A549 (cell line): ENCODE measurements at regions of chr16 and their contacts with region 1.

Region 1: DNA sequence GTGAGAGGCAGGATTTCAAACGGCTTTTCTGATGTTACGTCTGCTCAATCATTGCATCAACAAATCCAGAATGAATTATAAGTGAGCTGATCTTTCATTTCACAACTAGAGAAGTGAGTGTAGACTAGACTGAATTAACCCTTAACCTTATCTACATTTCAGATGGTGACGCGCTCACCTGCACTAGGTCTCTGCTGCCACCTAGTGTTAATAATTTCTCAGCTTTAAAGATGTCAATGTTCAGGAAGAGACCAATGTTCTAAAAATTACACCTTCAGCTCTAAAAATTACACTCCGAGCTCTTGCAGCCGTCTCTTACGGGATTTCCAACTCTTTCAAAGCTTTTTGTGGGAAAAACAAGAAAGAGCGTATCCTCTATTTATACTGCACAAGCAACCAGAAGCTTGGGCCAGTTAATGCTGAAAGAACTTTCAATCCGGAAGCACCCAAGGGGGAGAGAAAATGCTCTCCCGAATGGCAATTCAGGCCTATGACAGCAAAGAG is 88.2 kb upstream of the FA2H start:
- DNase-seq: peak; percentile 63 to 69
- ATAC-seq: peak; percentile 88 to 89
- H3K4me3 ChIP-seq: no peak overlapping the region
- H3K27ac ChIP-seq: no peak overlapping the region
- H3K4me1 ChIP-seq: no peaks in the 10 kb centered on the region
- CTCF ChIP-seq: peak; percentile 97
- EP300 ChIP-seq: no peak
- POLR2A ChIP-seq: no peak
- RAD21 ChIP-seq: peak; percentile 94 to 98

Region 2: DNA sequence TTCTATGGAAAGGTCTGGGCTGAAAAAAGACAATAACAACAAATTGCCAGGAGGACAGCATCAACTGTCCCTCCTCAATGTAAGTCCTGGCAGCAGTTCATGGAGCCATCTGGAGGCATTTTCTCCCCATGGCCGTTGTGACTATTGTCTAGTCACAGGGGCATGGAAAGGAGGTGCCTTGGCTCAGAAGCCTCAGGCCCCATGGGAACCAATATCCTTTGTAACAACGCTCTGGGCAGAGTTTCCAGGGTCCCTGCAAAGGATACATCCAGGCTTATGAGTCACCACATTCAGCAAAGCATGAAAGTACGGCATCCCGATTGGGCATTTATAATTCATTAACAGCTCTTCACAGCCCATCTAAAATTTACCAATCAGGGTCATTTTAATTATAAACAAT is 341.1 kb before region 1 on chr16:
- CTCF ChIA-PET with region 1: no interaction called
- POLR2A ChIA-PET with region 1: no interaction called
- DNase-seq: no peak
- ATAC-seq: peak in 1 of 2 experiments; percentile 42; a peak in 2 of 6 replicates
- H3K4me3 ChIP-seq: no peak overlapping the region
- H3K27ac ChIP-seq: no peak overlapping the region
- H3K4me1 ChIP-seq: no peaks in the 10 kb centered on the region
- CTCF ChIP-seq: no peak
- EP300 ChIP-seq: no peak
- POLR2A ChIP-seq: no peak
- RAD21 ChIP-seq: no peak

Region 3: GRCh38 chr16:74666425-74667254 is 196.2 kb before region 1 on chr16 and contains the start of gene RFWD3:
- CTCF ChIA-PET with region 1: interaction called, 11 read pairs
- POLR2A ChIA-PET with region 1: interaction called, 3 read pairs
- DNase-seq: peak; percentile 99 to 100
- ATAC-seq: peak; percentile 100
- H3K4me3 ChIP-seq: peak within 1 kb of the TSS; percentile 91
- H3K27ac ChIP-seq: peak within 1 kb of the TSS; percentile 88 to 93
- H3K4me1 ChIP-seq: peaks cover 12% of the 10 kb centered on the region; the same call in 1 of the 3 replicates
- CTCF ChIP-seq: no peak
- EP300 ChIP-seq: no peak
- POLR2A ChIP-seq: peak; percentile 85
- RAD21 ChIP-seq: no peak
- polyA plus RNA-seq, gene RFWD3: 50.6 and 52.5 TPM in 2 replicates

Region 4: GRCh38 chr16:74718741-74719610 is 143.8 kb before region 1 on chr16:
- CTCF ChIA-PET with region 1: interaction called, 176 read pairs
- POLR2A ChIA-PET with region 1: no interaction called
- DNase-seq: no peak
- ATAC-seq: peak in 1 of 2 experiments; percentile 57; a peak in 2 of 6 replicates
- H3K4me3 ChIP-seq: no peak overlapping the region
- H3K27ac ChIP-seq: no peak overlapping the region
- H3K4me1 ChIP-seq: no peaks in the 10 kb centered on the region
- CTCF ChIP-seq: no peak
- EP300 ChIP-seq: no peak
- POLR2A ChIP-seq: no peak
- RAD21 ChIP-seq: 0 out of 5 replicates have a peak, but pooled peaks of 1 of the 2 experiments have one; percentile 6

Region 5: GRCh38 chr16:74774203-74775116 is 88.3 kb before region 1 on chr16 and contains the start of gene FA2H:
- CTCF ChIA-PET with region 1: interaction called, 14 read pairs
- POLR2A ChIA-PET with region 1: interaction called, 4 read pairs
- DNase-seq: peak; percentile 71 to 96
- ATAC-seq: peak; percentile 96 to 98
- H3K4me3 ChIP-seq: peak within 1 kb of the TSS; percentile 87
- H3K27ac ChIP-seq: peak within 1 kb of the TSS; percentile 80 to 85
- H3K4me1 ChIP-seq: peaks cover 10% of the 10 kb centered on the region; the same call in 2 of the 3 replicates
- CTCF ChIP-seq: peak; percentile 50
- EP300 ChIP-seq: no peak
- POLR2A ChIP-seq: peak; percentile 34; the same call in 1 of the 2 replicates
- RAD21 ChIP-seq: peak in 1 of 2 experiments; percentile 44; a peak in 3 of 5 replicates
- polyA plus RNA-seq, gene FA2H: 7.1 and 11.0 TPM in 2 replicates

Region 6: GRCh38 chr16:74813109-74813641 is 49.6 kb before region 1 on chr16:
- CTCF ChIA-PET with region 1: interaction called, 161 read pairs
- POLR2A ChIA-PET with region 1: no interaction called
- DNase-seq: peak; percentile 87 to 91
- ATAC-seq: peak; percentile 99 to 100
- H3K4me3 ChIP-seq: no peak overlapping the region
- H3K27ac ChIP-seq: peak overlapping the region; percentile 39 to 74; a peak in 5 of 6 replicates
- H3K4me1 ChIP-seq: no peaks in the 10 kb centered on the region
- CTCF ChIP-seq: peak; percentile 96
- EP300 ChIP-seq: no peak
- POLR2A ChIP-seq: no peak
- RAD21 ChIP-seq: peak; percentile 88 to 96

Region 7: GRCh38 chr16:74852500-74852875 is 10.3 kb before region 1 on chr16:
- CTCF ChIA-PET with region 1: interaction called, 47 read pairs
- POLR2A ChIA-PET with region 1: no interaction called
- DNase-seq: no peak
- ATAC-seq: no peak
- H3K4me3 ChIP-seq: no peak overlapping the region
- H3K27ac ChIP-seq: no peak overlapping the region
- H3K4me1 ChIP-seq: no peaks in the 10 kb centered on the region
- CTCF ChIP-seq: no peak
- EP300 ChIP-seq: no peak
- POLR2A ChIP-seq: no peak
- RAD21 ChIP-seq: no peak

Region 8: DNA sequence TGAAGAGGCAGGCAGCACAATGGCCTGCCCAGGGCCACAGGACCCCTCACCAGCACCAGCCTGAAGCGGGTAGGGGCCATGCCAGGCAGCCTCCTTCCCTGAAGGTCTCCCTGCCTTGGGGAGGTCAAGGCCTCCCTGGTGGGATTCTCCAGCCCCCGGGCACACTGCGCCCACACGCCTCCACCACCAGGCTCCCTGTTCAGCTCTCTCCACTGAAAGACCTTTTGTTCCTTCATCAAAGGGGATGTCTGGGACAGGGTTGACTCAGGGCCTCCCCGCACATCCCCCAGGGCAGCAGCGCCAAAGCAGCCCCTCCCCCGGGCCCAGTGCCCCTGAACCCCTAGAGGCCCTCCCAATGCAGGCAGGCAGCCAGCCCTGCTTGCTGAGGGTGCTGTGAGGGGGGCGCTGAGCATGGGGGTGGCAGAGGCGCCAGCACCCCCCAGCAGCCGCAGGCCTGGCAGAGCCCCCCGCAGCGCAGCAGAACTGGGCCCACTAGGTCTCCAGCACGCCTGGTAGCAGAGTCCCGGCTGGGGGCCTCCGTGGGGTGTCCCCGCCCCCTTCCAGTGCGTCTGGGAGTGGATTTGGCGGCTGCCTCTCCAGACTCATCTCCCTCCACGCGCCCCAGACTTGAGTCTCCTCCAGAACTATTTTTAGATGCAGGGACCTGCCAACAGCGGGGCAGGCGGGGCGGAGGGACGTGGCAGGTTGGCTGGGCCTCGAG is 375.5 kb after region 1 on chr16:
- CTCF ChIA-PET with region 1: no interaction called
- POLR2A ChIA-PET with region 1: no interaction called
- DNase-seq: no peak
- ATAC-seq: no peak
- H3K4me3 ChIP-seq: no peak overlapping the region
- H3K27ac ChIP-seq: peak overlapping the region; percentile 48 to 84; a peak in 5 of 6 replicates
- H3K4me1 ChIP-seq: peaks cover 39% of the 10 kb centered on the region
- CTCF ChIP-seq: no peak
- EP300 ChIP-seq: no peak
- POLR2A ChIP-seq: no peak
- RAD21 ChIP-seq: no peak